GM10248 (cell line): ENCODE measurements at regions of chr11 and their contacts with region 1.

Region 1: DNA sequence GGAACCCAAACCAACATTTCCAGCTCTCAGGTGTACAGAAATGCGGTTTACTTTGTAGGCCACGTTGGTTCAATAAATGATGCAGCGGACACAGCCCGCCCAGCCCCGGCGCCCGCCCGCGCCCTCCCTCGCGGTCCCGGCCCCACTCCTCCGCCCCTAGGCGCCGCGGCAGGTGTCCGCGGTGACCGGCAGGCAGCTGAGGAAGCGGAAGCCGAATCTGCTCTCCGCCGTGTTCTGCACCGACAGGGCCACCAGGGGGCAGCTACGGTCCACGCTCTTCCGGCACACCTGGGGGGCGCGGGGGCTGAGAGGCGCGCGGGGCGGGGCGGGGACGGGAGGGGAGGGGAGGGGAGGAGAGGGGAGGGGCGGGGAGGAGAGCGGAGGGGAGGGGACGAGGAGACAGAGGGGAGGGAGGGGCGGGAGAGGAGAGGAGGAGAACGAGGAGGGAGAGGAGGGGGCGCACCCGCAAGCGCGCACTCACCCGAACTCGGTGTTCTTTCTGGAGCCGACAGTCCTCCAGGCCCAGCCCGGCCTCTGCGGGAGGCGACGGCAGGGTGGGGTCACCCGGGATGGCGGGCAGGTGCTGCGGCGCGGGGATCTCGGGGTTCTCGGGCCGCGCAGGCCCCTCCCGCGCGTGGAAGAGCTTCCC is 5.6 kb downstream of the LMNTD2 start:
- DNase-seq: peak; percentile 89
- CTCF ChIP-seq: peak; percentile 90

Region 2: GRCh38 chr11:469684-470560 is 85.0 kb before region 1 on chr11:
- CTCF ChIA-PET with region 1: no interaction called
- POLR2A ChIA-PET with region 1: no interaction called
- DNase-seq: no peak
- CTCF ChIP-seq: no peak

Region 3: GRCh38 chr11:506238-506994 is 48.5 kb before region 1 on chr11:
- CTCF ChIA-PET with region 1: no interaction called
- POLR2A ChIA-PET with region 1: no interaction called
- DNase-seq: peak; percentile 99
- CTCF ChIP-seq: no peak

Region 4: DNA sequence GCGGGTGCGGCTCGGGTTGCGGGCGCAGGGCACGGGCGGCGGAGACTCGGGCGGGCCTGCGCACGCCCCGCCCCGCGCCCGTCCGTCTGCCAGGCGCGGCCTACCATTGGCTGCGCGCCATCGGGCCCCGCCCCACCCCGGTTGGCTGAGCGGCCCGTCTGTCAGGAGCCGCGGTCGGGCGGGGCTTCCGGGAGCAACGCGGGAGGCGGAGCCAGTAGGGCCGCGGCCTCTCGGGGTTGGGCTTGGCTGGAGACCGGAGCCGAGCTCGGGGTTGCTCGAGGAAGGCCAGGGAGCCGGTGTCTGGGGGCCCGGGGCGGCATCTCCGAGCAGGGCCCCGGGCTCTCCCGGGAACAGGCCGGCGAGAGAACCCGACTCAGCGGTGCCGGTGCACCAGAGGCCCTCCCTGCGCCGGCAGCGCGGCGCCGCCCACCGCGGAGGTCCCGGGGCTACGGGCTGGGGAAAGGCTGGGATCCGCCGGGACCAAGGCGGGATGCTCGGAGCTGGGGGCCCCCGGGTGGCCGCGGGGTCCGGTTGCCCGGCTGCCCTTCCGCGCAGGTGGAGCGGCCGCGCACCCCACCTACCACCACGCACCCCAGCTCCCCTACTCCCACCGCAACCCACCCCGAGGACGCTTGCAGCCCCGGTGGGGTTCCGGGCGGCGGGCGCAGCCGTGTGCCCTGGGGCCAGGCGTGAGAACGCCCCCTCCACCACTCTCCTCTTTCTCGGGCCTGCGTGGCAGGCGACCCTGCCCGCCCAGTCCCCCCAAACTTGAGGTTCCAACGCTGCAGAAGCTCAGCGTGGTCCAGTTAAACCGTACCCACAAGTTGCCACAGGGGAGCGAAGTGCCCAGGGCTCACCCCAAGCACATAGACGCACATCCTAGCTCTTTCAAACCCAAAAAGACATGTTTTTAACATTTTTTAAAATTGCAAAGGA is 19.2 kb before region 1 on chr11 and contains the start of gene HRAS:
- CTCF ChIA-PET with region 1: interaction called, 11 read pairs
- POLR2A ChIA-PET with region 1: interaction called, 3 read pairs
- DNase-seq: peak; percentile 100
- CTCF ChIP-seq: no peak

Region 5: DNA sequence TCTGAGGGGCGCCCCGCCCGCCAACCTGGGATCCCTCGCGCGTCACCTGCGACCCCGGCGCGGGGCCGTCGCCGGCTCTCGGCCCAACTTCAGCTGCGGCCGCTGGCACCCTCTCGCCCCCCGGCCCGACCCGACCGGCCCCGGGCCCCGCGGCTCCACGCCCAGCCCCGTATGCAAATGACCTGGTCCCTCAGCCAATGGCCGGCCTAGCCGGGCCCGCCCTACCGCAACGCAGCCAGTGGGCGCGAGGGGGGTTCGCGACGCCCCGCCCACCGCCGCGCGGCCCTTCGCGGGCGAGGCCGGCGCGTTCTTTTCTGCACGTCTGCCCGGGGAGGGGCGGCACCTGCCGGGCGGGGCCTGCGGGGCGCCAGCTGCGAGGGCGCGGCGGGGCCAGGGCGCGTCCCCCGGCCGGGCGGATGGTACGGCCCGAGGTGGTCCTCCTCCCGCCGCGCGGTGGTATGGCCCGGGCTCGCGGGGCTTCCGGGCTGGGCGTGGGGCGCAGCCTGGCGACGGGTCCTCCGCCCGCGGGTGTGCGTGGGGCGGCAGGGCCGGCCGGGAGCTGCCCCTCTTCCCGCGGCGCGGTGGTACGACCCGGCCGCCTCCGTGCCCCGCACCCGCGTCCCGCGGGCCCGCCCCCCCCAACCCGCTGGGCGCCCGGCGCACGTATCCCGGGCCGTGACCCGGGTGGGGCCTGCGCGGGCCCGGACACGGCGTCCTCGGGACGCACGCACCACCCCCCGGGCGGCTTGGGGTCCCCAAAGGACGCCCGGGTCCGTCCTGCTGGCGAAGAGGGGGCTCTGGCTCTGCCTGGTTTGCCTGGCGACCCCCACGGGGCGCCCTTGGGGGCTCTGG is 13.6 kb after region 1 on chr11:
- CTCF ChIA-PET with region 1: interaction called, 36 read pairs
- POLR2A ChIA-PET with region 1: no interaction called
- DNase-seq: peak; percentile 97
- CTCF ChIP-seq: no peak

Region 6: GRCh38 chr11:662689-663274 is 107.8 kb after region 1 on chr11:
- CTCF ChIA-PET with region 1: no interaction called
- POLR2A ChIA-PET with region 1: no interaction called
- DNase-seq: peak; percentile 75
- CTCF ChIP-seq: peak; percentile 75